ENCODE measurements at regions of chr22 and their contacts with region 1.

Region 1: GRCh38 chr22:46079861-46080821 is 70.2 kb upstream of the PPARA start:
- DNase-seq: peak; percentile 89
- ATAC-seq: peak; percentile 50

Region 2: GRCh38 chr22:46013460-46014416 is 66.4 kb before region 1 on chr22:
- intact Hi-C with region 1: loop called (anchors 5 kb)
- DNase-seq: peak; percentile 96
- ATAC-seq: peak; percentile 91

Region 3: DNA sequence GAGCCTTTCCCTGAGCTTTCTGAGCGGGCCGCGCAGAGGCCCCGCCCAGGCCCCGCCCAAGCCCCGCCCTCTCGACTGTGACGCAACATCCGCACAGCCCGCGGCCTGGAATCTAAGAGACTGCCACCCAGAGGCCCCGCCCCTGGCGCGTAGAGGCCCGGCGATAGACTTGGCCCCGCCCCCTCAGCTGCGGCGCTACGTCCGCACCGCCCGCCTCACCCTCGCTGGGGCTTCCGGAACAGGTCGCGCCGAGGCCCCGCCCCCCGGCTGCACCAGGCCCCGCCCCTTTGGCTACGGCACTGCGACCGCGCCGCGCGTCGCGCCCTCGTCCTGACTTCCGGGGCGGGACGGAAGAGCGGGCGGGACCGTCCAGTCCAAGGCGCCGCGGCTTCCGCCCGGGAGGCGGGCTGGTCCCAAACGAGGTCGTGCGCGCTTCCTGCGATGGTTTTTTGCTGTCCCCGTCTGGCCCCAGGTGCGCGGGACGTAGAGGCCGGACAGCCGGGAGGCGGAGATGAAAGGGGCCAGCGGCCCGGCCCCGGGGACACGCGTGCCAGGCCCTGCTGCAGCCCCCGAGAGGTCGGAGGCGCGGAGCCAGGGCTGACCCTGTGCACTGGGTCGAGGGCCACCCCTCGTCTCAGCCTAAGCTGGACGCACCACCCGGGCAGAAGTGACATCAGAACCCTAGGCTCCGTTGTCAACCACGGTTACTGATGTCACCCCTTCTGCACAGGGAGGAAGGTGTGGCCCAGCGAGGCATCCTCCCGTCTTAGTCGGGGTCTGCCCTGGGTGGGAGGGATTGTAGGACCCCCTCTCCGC is 44.2 kb before region 1 on chr22:
- intact Hi-C with region 1: no loop called
- DNase-seq: peak; percentile 100
- ATAC-seq: peak; percentile 96

Measured in sciatic nerve (tissue), 2 donors.